Activated CD8-positive, alpha-beta T cell treated with anti-CD3 and anti-CD28 coated beads for 36 hours (primary cell): ENCODE measurements at regions of chr21 and their contacts with region 1.

Region 1: DNA sequence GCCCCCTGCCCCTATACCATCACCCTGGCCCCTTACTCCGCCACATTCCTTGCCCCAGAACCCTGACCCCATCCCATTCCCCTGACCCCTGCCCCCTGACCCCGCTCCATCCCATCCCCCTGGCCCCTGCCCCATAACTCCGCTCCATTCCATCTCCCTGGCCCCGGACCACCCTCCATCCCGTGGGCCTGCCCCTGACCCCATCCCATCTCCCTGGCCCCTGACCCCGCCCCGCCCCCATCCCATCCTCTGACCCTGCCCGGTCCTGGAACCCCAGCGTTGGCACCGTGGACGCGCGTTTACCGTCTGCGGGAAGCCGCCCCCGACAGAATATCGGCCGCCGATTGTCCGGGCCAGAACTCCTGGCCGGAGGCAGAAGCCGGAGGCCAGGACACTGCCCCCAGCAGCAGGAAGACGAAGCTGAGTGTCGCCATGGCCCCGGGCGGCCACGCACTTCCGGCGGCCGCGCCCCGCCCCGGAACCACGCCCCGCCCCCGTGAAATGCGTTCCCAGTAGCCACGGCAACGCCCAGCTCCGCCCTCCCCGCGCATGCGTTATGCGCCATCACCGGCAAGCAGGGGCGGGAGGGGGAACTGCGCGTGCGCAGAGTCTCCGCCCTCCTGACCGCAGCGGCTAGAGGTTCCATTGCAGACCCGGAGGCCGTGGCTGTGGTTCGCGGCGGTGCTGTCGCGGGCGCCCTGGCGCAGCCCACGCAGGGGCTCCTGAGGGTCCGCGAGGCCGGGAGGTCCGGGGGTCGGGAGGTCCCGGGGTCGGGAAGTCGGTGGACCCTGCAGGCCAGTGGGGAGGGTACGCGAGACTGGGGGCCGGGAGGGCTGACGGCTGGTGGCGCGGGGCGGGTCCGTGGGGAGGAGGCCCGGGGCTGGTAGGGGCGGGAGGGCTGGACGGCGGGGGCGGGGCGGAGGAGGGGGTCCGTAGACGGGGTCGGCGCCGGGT is at the start of gene POFUT2:
- DNase-seq: peak; percentile 97
- ATAC-seq: peak; percentile 82
- H3K4me3 Mint-ChIP-seq: peak within 1 kb of the TSS; percentile 77
- H3K27ac Mint-ChIP-seq: peak within 1 kb of the TSS; percentile 74
- H3K4me1 Mint-ChIP-seq: peaks cover 8% of the 10 kb centered on the region
- H3K27me3 Mint-ChIP-seq: no peaks in the 10 kb centered on the region
- CTCF ChIP-seq: no peak
- total RNA-seq, gene POFUT2: 11.7 to 12.4 TPM

Region 2: DNA sequence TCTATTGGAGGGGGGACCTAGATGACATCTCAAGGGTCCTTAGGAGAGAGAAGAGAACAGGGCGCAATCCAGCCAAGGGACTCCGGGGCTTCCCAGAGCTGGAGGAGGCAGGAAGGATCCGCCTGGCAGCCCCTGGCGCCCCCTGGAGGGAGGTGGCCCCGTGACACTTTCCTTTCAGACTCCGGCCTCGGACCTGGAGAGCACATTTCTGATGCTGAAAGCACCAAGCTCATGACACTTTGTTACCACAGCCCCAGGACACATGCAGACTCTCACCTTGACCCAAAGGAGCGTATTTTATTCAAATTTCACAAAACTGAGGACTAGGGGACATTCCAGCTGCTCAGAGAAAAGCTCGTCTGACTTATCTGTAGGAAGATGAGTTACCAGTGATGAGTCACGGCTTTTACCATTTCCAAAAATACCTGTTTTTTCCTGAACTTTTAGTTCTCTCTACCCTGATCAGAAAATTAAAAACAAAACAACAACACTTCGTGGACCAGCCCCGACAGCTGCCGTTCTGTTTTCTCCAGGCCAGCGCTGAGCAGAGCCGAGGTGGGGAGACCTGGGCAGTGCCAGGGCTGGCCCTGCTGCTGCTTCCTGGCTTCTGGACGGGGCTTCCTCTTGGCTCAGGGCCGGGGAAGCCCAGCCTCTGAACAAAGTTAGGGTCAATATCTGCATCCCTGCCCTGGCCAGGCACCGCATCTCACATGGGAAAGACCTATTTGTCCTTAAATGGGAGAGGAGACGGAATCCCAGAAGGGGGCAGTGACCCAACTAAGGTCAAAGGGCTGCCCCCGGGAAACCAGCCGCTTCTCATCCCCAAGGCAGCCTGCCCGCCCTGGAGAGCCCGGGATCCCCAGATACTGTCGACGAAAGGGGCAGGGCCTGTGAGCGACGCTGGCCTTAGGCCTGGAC is 21.6 kb after region 1 on chr21:
- CTCF ChIA-PET with region 1: interaction called, 10 read pairs
- POLR2A ChIA-PET with region 1: no interaction called
- intact Hi-C with region 1: no loop called
- DNase-seq: peak; percentile 65
- ATAC-seq: peak; percentile 43
- H3K4me3 Mint-ChIP-seq: no peak overlapping the region
- H3K27ac Mint-ChIP-seq: no peak overlapping the region
- H3K4me1 Mint-ChIP-seq: peaks cover 8% of the 10 kb centered on the region
- H3K27me3 Mint-ChIP-seq: no peaks in the 10 kb centered on the region
- CTCF ChIP-seq: peak; percentile 59

Region 3: GRCh38 chr21:45439161-45439872 is 151.6 kb after region 1 on chr21:
- CTCF ChIA-PET with region 1: interaction called, 19 read pairs
- POLR2A ChIA-PET with region 1: no interaction called
- intact Hi-C with region 1: loop called (anchors 5 kb)
- DNase-seq: peak; percentile 89
- ATAC-seq: peak; percentile 90
- H3K4me3 Mint-ChIP-seq: peak overlapping the region; percentile 49
- H3K27ac Mint-ChIP-seq: peak overlapping the region; percentile 5
- H3K4me1 Mint-ChIP-seq: no peaks in the 10 kb centered on the region
- H3K27me3 Mint-ChIP-seq: peaks cover 2% of the 10 kb centered on the region
- CTCF ChIP-seq: peak; percentile 95